ENCODE measurements at regions of chr2 and their contacts with region 1.

Region 1: DNA sequence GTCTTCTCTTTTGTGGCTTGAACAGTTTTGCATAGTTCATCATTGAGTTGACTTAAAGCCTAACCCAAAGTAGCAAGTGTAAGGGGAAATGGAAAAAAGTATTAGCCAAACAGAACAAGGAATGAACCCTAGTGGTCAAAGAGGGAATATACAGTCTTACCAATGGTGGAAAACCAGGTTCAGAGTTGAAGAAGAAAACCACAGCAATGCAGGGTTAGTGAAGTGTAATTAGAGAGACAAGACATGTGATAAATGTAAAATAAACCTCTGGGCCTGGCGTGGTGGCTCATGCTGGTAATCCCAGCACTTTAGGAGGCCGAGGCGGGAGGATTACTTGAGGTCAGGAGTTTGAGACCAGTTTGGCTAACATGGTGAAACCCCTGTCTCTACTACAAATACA is 2.4 kb downstream of the TTN start:
- DNase-seq: no peak
- ATAC-seq: no peak

Region 2: GRCh38 chr2:178859730-178860129 is 54.9 kb after region 1 on chr2:
- intact Hi-C with region 1: loop called (anchors 10 kb)
- DNase-seq: no peak
- ATAC-seq: peak; percentile 64

Region 3: DNA sequence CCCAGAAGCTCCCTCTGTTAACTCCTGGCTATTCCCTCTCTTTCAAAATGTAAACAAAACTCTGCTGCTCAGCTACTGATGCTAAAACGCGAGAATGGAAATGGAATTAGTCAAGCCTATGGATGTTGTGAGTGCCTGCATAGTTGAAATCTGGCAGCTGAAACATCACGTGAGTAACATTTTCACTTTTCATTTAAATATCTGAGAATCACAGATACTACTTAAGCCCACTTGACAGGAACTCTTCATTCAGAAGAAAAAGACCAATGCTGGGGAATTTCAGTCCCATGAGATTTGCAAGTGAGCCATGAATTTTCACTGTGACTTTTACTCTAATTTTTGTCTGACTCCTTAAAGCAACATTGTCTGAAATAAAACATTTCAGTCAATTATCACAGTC is 675.2 kb after region 1 on chr2:
- intact Hi-C with region 1: no loop called
- DNase-seq: no peak
- ATAC-seq: no peak